GM10248 (cell line): ENCODE measurements at regions of chr6 and their contacts with region 1.

Region 1: DNA sequence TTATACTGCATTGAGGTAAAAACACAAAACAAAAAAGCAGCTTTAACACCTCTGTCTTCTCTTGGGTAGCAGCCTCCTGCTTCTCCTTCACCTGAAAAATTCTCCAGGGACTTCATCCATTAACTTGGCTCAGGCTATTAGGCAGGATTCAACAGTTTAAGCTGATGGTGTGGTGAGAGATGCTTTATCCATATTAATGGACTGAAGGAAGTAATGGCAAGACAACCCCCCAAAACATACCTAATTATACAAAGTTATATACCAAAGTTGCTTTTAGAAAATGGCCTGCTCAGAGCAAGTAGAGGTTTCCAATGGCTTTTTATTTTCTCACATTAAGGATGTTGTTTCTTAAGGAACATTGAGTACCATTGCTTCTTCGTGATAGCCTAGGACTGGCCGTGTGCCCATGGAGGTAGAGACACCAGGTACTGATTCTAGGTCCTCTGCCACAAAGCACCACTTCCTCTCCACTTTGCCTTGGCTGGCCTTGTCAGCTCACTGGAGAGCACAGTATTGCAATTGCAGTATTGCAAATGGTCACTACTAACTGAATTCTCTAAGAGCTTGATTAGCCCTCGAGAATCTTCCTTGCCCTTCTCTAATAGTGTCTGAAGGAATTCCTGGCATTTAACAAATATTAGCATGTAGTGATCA is 7.3 kb downstream of the EDN1 start:
- DNase-seq: no peak
- CTCF ChIP-seq: no peak

Region 2: GRCh38 chr6:12266571-12266970 is 30.9 kb before region 1 on chr6:
- CTCF ChIA-PET with region 1: no interaction called
- POLR2A ChIA-PET with region 1: no interaction called
- DNase-seq: no peak
- CTCF ChIP-seq: no peak

Region 3: GRCh38 chr6:12311106-12311505 is 13.6 kb after region 1 on chr6:
- CTCF ChIA-PET with region 1: interaction called, 10 read pairs
- POLR2A ChIA-PET with region 1: no interaction called
- DNase-seq: no peak
- CTCF ChIP-seq: no peak